ENCODE measurements at regions of chr1 and their contacts with region 1.

Region 1: GRCh38 chr1:15042866-15043265 is 110.7 kb upstream of the TMEM51 start:
- DNase-seq: no peak

Region 2: DNA sequence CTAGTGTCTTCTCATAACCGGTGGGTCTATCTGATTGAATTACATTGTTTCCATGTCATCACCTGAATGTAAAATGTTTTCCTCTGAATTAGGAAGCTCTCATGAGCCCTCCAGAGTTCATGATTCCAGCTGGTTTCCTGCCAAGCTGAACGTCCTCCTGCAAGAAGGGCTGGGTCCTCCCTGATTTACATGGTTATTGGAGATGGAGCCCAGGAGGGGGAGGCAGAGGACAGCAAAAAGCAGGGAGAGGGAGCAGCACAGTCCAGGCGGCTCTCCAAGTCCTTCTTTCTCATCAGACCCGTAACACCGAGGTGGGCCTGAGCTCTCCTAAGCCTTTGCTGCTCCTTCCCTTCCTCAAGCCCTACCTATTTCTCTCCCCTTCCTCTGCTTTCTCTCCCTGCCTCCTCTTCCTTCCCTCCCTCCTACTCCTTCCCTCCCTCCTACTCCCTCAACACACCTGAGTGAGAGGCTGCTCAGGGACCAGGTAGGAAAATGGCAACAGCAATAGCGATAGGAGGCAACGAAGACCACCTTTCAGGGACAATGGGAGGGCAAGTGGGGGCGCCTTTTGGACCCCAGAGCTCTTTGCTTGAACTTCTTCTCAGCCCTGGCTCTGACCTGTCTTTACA is 1077.0 kb before region 1 on chr1:
- intact Hi-C with region 1: loop called in 1 of 2 experiments (anchors 5 kb)
- DNase-seq: no peak

Region 3: GRCh38 chr1:14923727-14924452 is 119.0 kb before region 1 on chr1:
- intact Hi-C with region 1: loop called in 1 of 2 experiments (anchors 1 kb)
- DNase-seq: peak; percentile 87

Region 4: GRCh38 chr1:15090373-15090772 is 47.5 kb after region 1 on chr1:
- intact Hi-C with region 1: no loop called
- DNase-seq: peak; percentile 78

Measured in posterior vena cava (tissue), 2 donors.